CD8-positive, alpha-beta T cell (primary cell): ENCODE measurements at regions of chr2 and their contacts with region 1.

Region 1: GRCh38 chr2:217785544-217786045 is 217.2 kb downstream of the TNS1 start:
- DNase-seq: peak; percentile 43 to 85 (median 71)
- ATAC-seq: peak; percentile 62
- H3K4me3 ChIP-seq: no peak overlapping the region
- H3K4me3 Mint-ChIP-seq: no peak overlapping the region
- H3K27ac ChIP-seq: no peak overlapping the region
- H3K27ac Mint-ChIP-seq: no peak overlapping the region
- H3K4me1 ChIP-seq: peaks cover 8% of the 10 kb centered on the region
- H3K4me1 Mint-ChIP-seq: peaks cover 21% of the 10 kb centered on the region
- H3K27me3 ChIP-seq: no peaks in the 10 kb centered on the region
- H3K27me3 Mint-ChIP-seq: no peaks in the 10 kb centered on the region
- CTCF ChIP-seq: peak; percentile 79

Region 2: GRCh38 chr2:217880287-217880889 is 94.8 kb after region 1 on chr2:
- CTCF ChIA-PET with region 1: interaction called, 50 read pairs
- POLR2A ChIA-PET with region 1: no interaction called
- intact Hi-C with region 1: no loop called
- DNase-seq: no peak
- ATAC-seq: no peak
- H3K4me3 ChIP-seq: no peak overlapping the region
- H3K4me3 Mint-ChIP-seq: no peak overlapping the region
- H3K27ac ChIP-seq: no peak overlapping the region
- H3K27ac Mint-ChIP-seq: no peak overlapping the region
- H3K4me1 ChIP-seq: no peaks in the 10 kb centered on the region
- H3K4me1 Mint-ChIP-seq: no peaks in the 10 kb centered on the region
- H3K27me3 ChIP-seq: no peaks in the 10 kb centered on the region
- H3K27me3 Mint-ChIP-seq: no peaks in the 10 kb centered on the region
- CTCF ChIP-seq: no peak

Region 3: DNA sequence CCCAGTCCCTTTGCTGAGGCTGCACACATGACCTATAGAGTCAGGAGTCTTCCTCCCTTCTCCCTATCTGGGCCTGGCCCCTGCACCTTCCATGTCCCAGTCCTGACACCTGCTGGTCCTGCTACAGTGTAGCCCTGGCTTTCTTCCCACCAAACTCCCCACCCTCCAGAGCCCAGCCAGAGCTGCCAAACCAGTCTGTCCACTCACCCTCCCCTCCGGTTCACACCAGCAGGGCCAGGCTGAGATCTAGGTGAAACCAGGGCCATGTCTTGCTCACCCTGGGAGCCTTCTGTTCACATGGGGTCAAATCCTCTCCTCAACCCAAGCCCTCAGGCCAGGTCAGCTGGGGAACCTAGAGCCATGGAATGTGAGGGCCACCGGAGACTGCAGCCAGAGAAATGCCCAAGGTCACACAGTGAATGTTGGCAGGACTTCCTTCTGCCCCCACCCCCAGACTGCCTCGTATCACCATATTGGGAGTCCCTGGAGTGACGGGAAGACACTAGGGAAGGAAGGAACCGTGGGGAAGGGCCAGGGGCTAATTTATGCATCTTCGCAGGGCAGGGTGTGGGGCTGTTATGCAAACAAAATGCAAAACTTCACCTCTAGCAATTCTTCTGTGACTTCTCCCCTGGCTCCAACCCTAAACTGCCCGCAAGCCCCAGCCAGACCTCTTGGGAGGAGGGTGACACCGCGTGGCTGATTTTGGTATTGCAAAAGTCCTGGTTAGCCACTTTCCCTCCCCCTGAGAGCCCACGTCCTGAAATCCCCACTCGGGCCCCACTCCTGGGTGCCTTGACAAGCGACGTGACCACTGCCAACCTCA is 202.6 kb after region 1 on chr2:
- CTCF ChIA-PET with region 1: interaction called, 11 read pairs
- POLR2A ChIA-PET with region 1: no interaction called
- intact Hi-C with region 1: loop called (anchors 1 kb)
- DNase-seq: peak; percentile 23 to 67 (median 52)
- ATAC-seq: peak; percentile 56
- H3K4me3 ChIP-seq: no peak overlapping the region
- H3K4me3 Mint-ChIP-seq: no peak overlapping the region
- H3K27ac ChIP-seq: no peak overlapping the region
- H3K27ac Mint-ChIP-seq: no peak overlapping the region
- H3K4me1 ChIP-seq: no peaks in the 10 kb centered on the region
- H3K4me1 Mint-ChIP-seq: no peaks in the 10 kb centered on the region
- H3K27me3 ChIP-seq: no peaks in the 10 kb centered on the region
- H3K27me3 Mint-ChIP-seq: peaks cover 13% of the 10 kb centered on the region
- CTCF ChIP-seq: peak; percentile 64

Region 4: GRCh38 chr2:218063486-218063885 is 277.9 kb after region 1 on chr2:
- CTCF ChIA-PET with region 1: interaction called, 12 read pairs
- POLR2A ChIA-PET with region 1: no interaction called
- intact Hi-C with region 1: loop called (anchors 1 kb)
- DNase-seq: peak in 1 of 9 experiments; percentile 24
- ATAC-seq: no peak
- H3K4me3 ChIP-seq: no peak overlapping the region
- H3K4me3 Mint-ChIP-seq: no peak overlapping the region
- H3K27ac ChIP-seq: no peak overlapping the region
- H3K27ac Mint-ChIP-seq: no peak overlapping the region
- H3K4me1 ChIP-seq: peaks cover 1% of the 10 kb centered on the region
- H3K4me1 Mint-ChIP-seq: no peaks in the 10 kb centered on the region
- H3K27me3 ChIP-seq: peaks cover 0 to 4% of the 10 kb centered on the region in 2 experiments
- H3K27me3 Mint-ChIP-seq: peaks cover 25% of the 10 kb centered on the region
- CTCF ChIP-seq: no peak